G401 (cell line): ENCODE measurements at regions of chr2 and their contacts with region 1.

Region 1: DNA sequence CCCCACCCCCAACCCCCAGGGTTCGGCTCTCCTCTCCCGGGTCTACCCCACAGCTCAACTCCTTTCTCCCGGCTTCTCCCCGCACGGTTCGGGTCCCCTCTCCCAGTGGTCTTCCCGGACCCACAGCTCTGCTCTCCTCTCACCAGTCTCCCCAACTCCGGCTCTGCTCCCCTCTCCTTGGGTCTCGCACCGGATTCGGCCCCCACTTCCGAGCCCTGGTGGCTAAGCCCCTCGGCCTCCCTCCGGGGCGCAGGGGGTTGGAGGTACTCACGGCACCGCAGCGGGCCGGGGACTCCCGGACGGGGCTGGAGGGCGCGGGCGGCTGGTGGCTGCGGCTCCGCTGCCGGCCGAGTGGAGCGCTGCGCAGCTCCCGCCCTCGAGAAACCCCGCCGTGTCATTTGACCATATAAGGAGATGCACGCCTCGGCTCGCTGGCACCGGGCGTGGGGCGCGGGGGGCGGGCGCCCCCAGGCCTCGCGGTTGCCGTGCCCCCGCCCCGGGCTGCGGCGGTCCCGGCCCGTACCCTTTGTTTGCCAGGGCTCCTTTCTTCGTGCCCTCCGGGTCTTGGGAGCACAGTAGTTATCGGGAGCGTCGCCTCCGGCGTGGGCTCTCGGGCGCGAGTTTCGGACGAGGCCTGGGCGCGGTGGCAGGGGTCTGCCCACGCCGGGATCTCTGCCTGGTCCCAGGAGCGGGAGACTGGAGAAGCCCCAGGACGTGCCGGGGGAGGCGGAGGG is at the start of gene FHL2:
- DNase-seq: peak; percentile 64
- total RNA-seq, gene FHL2: 54.6 and 70.4 TPM in 2 replicates

Region 2: GRCh38 chr2:105521205-105521604 is 122.3 kb after region 1 on chr2:
- in situ Hi-C with region 1: loop called (anchors 25 kb)
- DNase-seq: peak; percentile 61